Calu3 (cell line): ENCODE measurements at regions of chr22 and their contacts with region 1.

Region 1: DNA sequence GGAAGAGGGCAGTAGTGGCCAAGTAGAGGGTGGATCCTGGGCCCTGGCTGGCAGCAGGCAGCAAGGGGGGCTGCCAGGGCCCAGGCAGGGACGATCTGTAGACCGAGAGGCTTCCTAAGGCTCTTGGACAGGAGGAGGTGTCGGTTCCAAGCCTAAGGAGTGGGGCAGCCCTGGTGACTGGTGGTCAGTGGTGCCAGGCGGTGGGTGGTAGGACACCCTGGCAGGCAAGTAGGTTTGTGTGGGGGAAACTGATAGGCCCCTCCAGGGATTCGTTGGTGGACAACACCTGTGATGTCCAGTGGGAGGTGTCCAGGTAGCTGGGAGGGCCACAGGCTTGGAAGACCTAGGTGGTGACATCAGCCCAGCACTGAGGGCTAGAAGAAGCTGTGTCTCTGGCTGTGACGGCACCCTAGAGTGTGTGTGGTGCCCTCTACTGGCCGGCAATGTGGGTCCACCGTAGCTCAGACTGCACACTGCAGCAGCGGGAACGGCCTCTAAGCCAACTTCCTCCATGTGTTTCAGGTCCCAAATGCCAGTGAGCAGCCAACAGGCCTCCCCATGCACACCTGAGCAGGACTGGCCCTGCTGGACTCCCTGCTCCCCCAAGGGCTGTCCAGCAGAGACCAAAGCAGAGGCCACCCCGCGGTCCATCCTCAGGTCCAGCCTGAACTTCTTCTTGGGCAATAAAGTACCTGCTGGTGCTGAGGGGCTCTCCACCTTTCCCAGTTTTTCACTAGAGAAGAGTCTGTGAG is 9.4 kb upstream of the SAMM50 start:
- DNase-seq: peak; percentile 82
- H3K4me3 Mint-ChIP-seq: no peak overlapping the region
- H3K27ac Mint-ChIP-seq: no peak overlapping the region
- H3K4me1 Mint-ChIP-seq: no peaks in the 10 kb centered on the region
- H3K27me3 Mint-ChIP-seq: no peaks in the 10 kb centered on the region
- CTCF ChIP-seq: peak; percentile 72

Region 2: DNA sequence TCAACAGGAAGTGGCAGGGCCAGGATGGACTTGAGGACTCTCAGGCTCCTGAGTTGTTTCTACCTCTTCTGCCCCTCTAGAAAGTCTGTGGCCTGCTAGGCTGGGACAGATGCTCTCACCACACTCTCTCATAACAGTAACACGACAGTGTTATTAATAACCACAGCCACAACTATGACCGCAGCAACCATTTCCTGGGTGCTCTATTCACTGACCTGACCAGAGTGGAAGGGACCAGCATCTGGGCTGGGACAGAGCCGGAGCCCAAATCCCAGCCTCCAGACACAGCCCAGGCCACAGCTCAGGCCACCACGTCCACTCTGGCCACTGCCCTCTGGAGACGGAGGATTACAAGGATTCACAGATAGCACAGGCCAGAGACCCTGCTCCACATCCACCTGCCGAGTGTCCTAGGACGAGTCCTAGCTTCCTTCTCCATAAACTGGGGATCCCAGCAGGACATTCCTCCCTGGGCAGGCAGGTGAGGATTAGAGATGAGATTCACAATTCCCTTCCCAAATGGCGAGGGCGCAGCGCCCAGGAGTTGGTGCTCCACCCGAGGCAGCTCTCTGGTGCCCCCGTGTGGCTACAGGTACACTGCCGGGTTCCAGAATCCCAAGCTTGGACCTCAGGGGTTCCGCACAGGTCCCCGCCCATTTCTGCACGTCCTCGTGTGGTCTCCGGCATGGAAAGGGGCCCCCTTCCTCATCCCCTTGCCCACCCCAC is 61.0 kb before region 1 on chr22:
- CTCF ChIA-PET with region 1: interaction called, 72 read pairs
- intact Hi-C with region 1: loop called (anchors 1 kb)
- DNase-seq: peak; percentile 84
- H3K4me3 Mint-ChIP-seq: no peak overlapping the region
- H3K27ac Mint-ChIP-seq: no peak overlapping the region
- H3K4me1 Mint-ChIP-seq: no peaks in the 10 kb centered on the region
- H3K27me3 Mint-ChIP-seq: peaks cover 76% of the 10 kb centered on the region
- CTCF ChIP-seq: peak; percentile 93

Region 3: DNA sequence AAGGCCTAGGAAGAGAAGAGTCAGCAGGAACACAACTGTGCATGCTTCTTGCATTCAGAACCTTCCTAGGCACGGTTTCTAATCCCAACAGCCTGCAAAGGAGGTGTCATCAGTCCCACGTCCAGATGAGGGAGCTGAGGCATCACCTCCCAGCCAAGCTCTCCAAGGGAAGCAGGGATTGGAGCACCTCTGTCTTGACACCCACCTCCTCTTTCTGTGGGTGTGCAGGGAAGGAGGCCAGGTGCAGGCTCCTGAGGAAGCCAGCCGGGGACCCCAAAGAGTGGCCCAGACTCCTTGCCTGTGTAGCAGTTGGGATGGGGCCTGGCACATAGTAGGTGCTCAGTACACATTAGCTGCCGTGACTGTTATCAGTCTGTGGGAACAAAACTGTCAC is 56.0 kb before region 1 on chr22:
- CTCF ChIA-PET with region 1: interaction called, 33 read pairs
- intact Hi-C with region 1: no loop called
- DNase-seq: no peak
- H3K4me3 Mint-ChIP-seq: no peak overlapping the region
- H3K27ac Mint-ChIP-seq: no peak overlapping the region
- H3K4me1 Mint-ChIP-seq: no peaks in the 10 kb centered on the region
- H3K27me3 Mint-ChIP-seq: peaks cover 92% of the 10 kb centered on the region
- CTCF ChIP-seq: no peak